Activated naive CD8-positive, alpha-beta T cell treated with anti-CD3 and anti-CD28 coated beads, Interleukin-2, amount 10 ng/mL, durations not matched to agents 7 days and 5 days (primary cell): ENCODE measurements at regions of chr19 and their contacts with region 1.

Region 1: GRCh38 chr19:47112997-47113849 is at the start of gene ZC3H4:
- DNase-seq: peak; percentile 98
- ATAC-seq: peak; percentile 86
- H3K4me3 Mint-ChIP-seq: peak within 1 kb of the TSS; percentile 97
- H3K27ac Mint-ChIP-seq: peak within 1 kb of the TSS; percentile 100
- H3K4me1 Mint-ChIP-seq: peaks cover 21% of the 10 kb centered on the region
- H3K27me3 Mint-ChIP-seq: no peaks in the 10 kb centered on the region
- total RNA-seq, gene ZC3H4: 84.3 to 86.0 TPM

Region 2: DNA sequence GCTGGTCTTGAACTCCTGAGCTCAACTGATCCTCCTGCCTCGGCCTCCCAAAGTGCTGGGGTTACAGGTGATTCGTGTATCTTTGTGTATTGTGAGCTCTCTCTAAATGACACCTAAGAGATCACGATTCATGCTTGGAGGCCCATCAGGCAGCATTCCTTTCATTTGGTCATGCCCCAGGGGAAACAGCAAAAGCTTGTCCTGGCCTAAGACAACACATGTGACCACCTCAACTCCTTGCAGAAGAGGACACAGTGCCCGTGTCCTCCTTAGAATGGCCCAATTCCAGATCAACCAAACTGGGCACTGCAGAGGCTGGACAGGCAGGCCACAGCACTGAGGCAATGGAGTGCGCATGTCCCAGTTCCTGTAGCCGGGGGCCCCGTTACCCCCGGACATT is 32.1 kb before region 1 on chr19:
- POLR2A ChIA-PET with region 1: interaction called, 37 read pairs
- DNase-seq: no peak
- ATAC-seq: no peak
- H3K4me3 Mint-ChIP-seq: no peak overlapping the region
- H3K27ac Mint-ChIP-seq: no peak overlapping the region
- H3K4me1 Mint-ChIP-seq: peaks cover 6% of the 10 kb centered on the region
- H3K27me3 Mint-ChIP-seq: no peaks in the 10 kb centered on the region

Region 3: GRCh38 chr19:47124937-47125668 is 11.9 kb after region 1 on chr19:
- POLR2A ChIA-PET with region 1: interaction called, 19 read pairs
- DNase-seq: no peak
- ATAC-seq: peak; percentile 50
- H3K4me3 Mint-ChIP-seq: no peak overlapping the region
- H3K27ac Mint-ChIP-seq: no peak overlapping the region
- H3K4me1 Mint-ChIP-seq: peaks cover 9% of the 10 kb centered on the region
- H3K27me3 Mint-ChIP-seq: peaks cover 1% of the 10 kb centered on the region

Region 4: GRCh38 chr19:47225746-47226425 is 112.7 kb after region 1 on chr19:
- POLR2A ChIA-PET with region 1: interaction called, 14 read pairs
- DNase-seq: peak; percentile 94
- ATAC-seq: peak; percentile 69
- H3K4me3 Mint-ChIP-seq: peak overlapping the region; percentile 45
- H3K27ac Mint-ChIP-seq: peak overlapping the region; percentile 69
- H3K4me1 Mint-ChIP-seq: peaks cover 7% of the 10 kb centered on the region
- H3K27me3 Mint-ChIP-seq: no peaks in the 10 kb centered on the region

Region 5: DNA sequence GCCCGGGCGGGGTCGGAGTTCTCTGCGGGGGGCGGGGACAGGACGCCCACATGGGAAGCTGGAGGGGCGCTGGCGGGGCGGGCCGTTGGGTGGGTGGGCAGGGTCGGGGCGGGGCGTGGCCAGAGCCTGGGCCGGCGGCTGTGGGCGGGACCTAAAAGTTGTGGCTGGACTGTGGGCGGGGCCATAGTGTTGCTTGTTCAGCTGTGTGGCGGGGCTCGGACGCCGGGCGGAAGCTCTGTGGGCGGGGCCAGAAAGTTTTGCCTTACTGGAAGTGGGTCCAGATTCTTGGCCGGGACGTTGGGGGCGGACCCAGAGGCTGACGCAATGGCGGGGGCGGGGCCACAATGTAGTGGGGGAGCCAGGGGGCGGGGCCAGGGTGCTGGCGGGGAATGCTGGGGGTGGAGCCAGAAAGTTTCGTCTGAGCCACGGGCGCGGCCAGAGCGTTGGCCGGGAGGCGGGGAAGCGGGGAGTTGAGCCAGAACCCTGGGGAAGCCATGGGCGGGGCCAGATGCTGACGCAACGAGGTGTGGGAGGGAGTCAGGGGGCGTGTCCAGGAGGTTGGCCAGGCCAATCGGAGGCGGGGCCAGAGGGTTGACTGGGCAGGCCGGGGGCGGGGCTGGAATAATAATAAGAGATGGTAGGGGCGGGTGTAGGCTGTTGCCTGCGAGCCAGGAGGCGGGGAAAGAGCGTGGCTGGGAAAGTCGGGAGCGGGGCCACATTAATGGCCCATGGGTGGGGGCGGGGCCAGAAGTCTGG is 143.6 kb after region 1 on chr19:
- POLR2A ChIA-PET with region 1: interaction called, 12 read pairs
- DNase-seq: peak; percentile 100
- ATAC-seq: peak; percentile 90
- H3K4me3 Mint-ChIP-seq: peak overlapping the region; percentile 97
- H3K27ac Mint-ChIP-seq: peak overlapping the region; percentile 96
- H3K4me1 Mint-ChIP-seq: peaks cover 29% of the 10 kb centered on the region
- H3K27me3 Mint-ChIP-seq: no peaks in the 10 kb centered on the region